Activated B cell treated with CpG ODN at 0.5 μM for 24 hours (primary cell): ENCODE measurements at regions of chr3 and their contacts with region 1.

Region 1: GRCh38 chr3:71064288-71064955 is 519.1 kb downstream of the FOXP1 start:
- DNase-seq: peak; percentile 64
- ATAC-seq: peak; percentile 33
- H3K4me3 Mint-ChIP-seq: no peak overlapping the region
- H3K27ac Mint-ChIP-seq: no peak overlapping the region
- H3K4me1 Mint-ChIP-seq: peaks cover 67% of the 10 kb centered on the region
- H3K27me3 Mint-ChIP-seq: no peaks in the 10 kb centered on the region
- CTCF ChIP-seq: no peak

Region 2: GRCh38 chr3:71031914-71032521 is 32.4 kb before region 1 on chr3:
- CTCF ChIA-PET with region 1: interaction called, 4 read pairs
- POLR2A ChIA-PET with region 1: interaction called, 5 read pairs
- intact Hi-C with region 1: loop called (anchors 1 kb)
- DNase-seq: peak; percentile 55
- ATAC-seq: peak; percentile 93
- H3K4me3 Mint-ChIP-seq: peak overlapping the region; percentile 67
- H3K27ac Mint-ChIP-seq: peak overlapping the region; percentile 91
- H3K4me1 Mint-ChIP-seq: peaks cover 93% of the 10 kb centered on the region
- H3K27me3 Mint-ChIP-seq: no peaks in the 10 kb centered on the region
- CTCF ChIP-seq: no peak

Region 3: GRCh38 chr3:71050538-71051258 is 13.7 kb before region 1 on chr3:
- CTCF ChIA-PET with region 1: interaction called, 6 read pairs
- POLR2A ChIA-PET with region 1: interaction called, 82 read pairs
- intact Hi-C with region 1: loop called (anchors 1 kb)
- DNase-seq: no peak
- ATAC-seq: no peak
- H3K4me3 Mint-ChIP-seq: peak overlapping the region; percentile 44
- H3K27ac Mint-ChIP-seq: peak overlapping the region; percentile 72
- H3K4me1 Mint-ChIP-seq: peaks cover 100% of the 10 kb centered on the region
- H3K27me3 Mint-ChIP-seq: no peaks in the 10 kb centered on the region
- CTCF ChIP-seq: no peak

Region 4: DNA sequence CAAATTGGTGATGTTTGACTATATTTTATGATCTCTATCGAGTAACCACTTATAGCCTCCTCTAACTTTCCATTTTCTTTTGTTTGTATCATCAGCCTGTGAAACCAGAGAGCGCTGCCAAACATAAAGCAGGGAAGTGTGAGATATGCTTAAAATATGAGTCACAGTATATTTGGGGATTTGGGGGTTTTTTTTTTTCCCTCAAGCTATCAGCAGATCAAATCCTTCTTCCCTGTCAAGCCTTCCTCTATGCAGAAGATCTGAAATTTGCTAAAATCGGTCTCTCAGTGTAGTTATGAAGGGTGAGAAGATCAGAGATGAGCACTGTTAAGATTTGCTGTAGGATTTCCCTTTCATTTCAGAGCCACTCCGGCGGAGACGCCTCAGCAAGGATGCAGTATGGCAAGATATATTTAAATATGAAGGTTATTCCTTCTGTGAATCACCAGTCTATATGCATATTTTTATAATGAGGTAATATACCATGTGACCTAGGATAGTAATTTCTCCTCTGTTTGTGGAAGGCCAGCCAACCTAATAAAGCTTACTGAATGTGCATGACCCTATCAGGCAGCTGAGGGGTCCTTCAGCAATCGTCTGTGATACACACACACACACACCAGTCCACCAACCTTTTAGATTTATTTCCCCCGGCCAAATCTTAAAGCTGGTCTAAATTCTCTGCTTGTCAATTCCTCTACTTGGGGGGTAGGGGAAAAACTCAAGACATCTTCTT is 45.0 kb after region 1 on chr3:
- CTCF ChIA-PET with region 1: no interaction called
- POLR2A ChIA-PET with region 1: interaction called, 14 read pairs
- intact Hi-C with region 1: no loop called
- DNase-seq: no peak
- ATAC-seq: peak; percentile 60
- H3K4me3 Mint-ChIP-seq: peak overlapping the region; percentile 52
- H3K27ac Mint-ChIP-seq: peak overlapping the region; percentile 90
- H3K4me1 Mint-ChIP-seq: peaks cover 86% of the 10 kb centered on the region
- H3K27me3 Mint-ChIP-seq: no peaks in the 10 kb centered on the region
- CTCF ChIP-seq: no peak

Region 5: GRCh38 chr3:71117572-71118247 is 53.3 kb after region 1 on chr3:
- CTCF ChIA-PET with region 1: no interaction called
- POLR2A ChIA-PET with region 1: interaction called, 47 read pairs
- intact Hi-C with region 1: loop called (anchors 1 kb)
- DNase-seq: no peak
- ATAC-seq: peak; percentile 69
- H3K4me3 Mint-ChIP-seq: peak overlapping the region; percentile 64
- H3K27ac Mint-ChIP-seq: peak overlapping the region; percentile 90
- H3K4me1 Mint-ChIP-seq: peaks cover 85% of the 10 kb centered on the region
- H3K27me3 Mint-ChIP-seq: no peaks in the 10 kb centered on the region
- CTCF ChIP-seq: no peak

Region 6: GRCh38 chr3:71226565-71227269 is 162.3 kb after region 1 on chr3:
- CTCF ChIA-PET with region 1: no interaction called
- POLR2A ChIA-PET with region 1: interaction called, 24 read pairs
- intact Hi-C with region 1: loop called (anchors 2 kb)
- DNase-seq: peak; percentile 50
- ATAC-seq: peak; percentile 76
- H3K4me3 Mint-ChIP-seq: peak overlapping the region; percentile 89
- H3K27ac Mint-ChIP-seq: peak overlapping the region; percentile 97
- H3K4me1 Mint-ChIP-seq: peaks cover 76% of the 10 kb centered on the region
- H3K27me3 Mint-ChIP-seq: no peaks in the 10 kb centered on the region
- CTCF ChIP-seq: no peak

Region 7: DNA sequence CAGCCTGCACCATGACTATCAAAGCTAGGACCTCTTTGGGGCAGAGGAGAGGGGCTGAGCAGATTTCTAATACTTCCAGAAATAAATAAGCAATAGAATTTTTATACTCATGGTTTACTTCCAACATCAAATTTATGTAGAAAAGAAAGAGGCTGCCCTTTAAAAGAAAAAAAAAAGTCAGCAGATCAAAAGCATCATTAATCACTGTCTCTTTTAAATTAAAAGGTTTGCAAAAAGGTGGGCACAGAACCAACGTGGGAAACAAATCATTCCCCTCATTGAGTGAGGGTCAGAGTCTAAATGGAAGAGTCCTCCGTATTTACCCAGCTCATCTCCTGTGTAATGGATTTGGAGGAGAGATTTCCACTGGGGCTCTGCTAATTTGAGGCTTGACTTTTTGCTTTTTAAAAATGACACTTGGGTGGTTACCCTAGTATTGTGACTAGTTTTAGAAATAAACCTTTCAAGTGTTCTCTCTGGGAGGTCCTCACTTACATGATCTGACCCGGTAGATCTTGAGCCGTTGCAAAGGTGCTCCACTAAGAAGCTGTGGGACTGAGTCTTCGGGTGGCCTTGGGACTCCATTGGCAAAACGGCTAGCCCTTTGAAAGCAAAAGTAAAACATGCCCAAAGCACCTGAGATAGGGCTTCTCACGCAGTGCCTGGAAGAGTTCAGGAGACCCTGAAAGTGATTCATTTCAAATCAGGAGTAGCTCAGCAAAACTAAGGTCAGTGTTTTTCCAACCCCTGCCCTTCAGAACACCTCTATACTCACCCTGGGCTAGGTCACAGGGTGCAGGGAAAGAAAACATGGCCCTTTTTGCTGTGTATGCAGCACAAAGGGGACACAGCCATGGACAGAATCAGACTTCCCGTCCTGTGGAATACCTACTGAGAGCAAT is 198.2 kb after region 1 on chr3:
- CTCF ChIA-PET with region 1: no interaction called
- POLR2A ChIA-PET with region 1: no interaction called
- intact Hi-C with region 1: no loop called
- DNase-seq: no peak
- ATAC-seq: no peak
- H3K4me3 Mint-ChIP-seq: no peak overlapping the region
- H3K27ac Mint-ChIP-seq: peak overlapping the region; percentile 76
- H3K4me1 Mint-ChIP-seq: peaks cover 67% of the 10 kb centered on the region
- H3K27me3 Mint-ChIP-seq: no peaks in the 10 kb centered on the region
- CTCF ChIP-seq: no peak

Region 8: DNA sequence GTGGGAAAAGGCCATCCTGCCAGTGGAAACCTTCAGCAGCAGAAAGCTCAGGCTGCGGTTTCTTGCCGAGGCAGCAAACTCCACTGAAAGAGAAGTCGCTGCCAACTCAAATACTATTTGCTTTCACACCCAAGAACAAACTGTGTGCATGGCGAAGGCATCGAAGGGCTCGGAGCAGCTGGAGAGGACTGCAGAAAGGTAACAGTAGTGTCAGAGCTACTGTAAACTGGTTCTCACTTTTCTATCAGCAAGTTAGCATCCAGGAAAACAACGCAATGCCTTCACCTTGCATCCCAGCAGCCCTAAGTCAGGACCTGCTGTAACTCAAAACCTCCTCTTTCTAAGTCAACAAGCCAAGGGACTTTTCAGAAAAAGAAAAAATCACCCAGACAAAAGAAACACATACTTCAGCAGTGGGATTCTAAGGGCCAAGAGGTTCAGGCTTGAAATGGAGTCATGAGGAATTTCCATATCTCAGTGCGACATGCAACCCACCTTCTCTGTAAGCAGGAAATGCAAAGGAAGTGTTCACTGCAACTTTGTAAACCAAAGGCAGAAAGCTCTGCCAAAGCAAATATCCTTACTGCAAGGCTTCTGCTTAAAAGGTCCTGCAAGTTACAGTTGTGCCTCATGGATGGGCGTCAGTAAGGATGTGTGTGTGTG is 325.6 kb after region 1 on chr3:
- CTCF ChIA-PET with region 1: no interaction called
- POLR2A ChIA-PET with region 1: interaction called, 20 read pairs
- intact Hi-C with region 1: loop called (anchors 1 kb)
- DNase-seq: no peak
- ATAC-seq: peak; percentile 6
- H3K4me3 Mint-ChIP-seq: peak overlapping the region; percentile 73
- H3K27ac Mint-ChIP-seq: peak overlapping the region; percentile 99
- H3K4me1 Mint-ChIP-seq: peaks cover 86% of the 10 kb centered on the region
- H3K27me3 Mint-ChIP-seq: no peaks in the 10 kb centered on the region
- CTCF ChIP-seq: no peak